Left ventricle myocardium inferior (tissue), 1 donor: ENCODE measurements at regions of chr11 and their contacts with region 1.

Region 1: DNA sequence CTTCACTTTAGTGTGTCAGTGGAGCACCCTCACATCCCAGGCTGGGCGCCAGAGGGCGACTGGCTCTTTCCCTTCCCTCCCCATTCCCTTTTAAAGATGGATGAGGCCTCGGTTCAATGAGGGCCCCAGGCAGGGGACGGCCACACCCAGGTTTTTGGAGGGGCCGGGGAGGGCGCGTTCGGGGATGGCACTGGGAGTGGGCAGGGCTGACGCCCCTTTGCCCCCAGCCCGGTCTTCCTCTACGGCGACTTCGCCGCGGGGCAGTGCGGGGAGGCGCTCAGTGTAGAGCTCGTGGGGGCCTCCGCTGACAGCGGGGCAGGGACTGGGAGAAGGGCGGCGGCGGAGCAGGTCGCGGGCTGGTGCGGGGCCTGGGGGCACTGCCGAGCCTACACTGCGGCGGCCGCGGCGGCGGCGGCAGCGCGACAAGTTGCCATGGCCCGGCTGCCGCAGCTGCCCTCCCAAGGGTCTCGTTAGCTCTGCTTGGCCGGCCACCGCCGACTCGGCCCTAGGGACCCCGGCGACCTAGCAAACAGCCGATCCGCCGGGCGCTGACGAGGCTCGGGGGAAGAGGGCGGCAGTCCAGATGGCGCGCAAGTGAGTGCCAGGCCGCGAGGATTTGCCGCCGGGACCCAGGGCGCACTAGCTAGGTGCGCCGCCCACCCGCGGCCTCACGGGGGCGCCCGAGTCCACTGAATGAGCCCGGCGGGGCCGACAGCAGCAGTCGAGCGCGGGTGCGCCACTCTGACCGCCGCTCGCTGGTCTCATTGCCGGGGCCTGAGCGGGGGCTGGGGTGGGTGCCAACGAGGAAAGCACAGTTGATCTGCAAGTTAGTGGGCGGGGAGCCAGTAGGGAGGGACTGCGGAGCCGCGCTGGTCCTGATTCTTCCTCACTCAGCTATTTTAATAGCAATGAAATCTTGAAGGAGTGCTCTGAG is 92.7 kb downstream of the RRM1 start:
- DNase-seq: peak; percentile 93
- H3K4me3 ChIP-seq: peak overlapping the region; percentile 77
- H3K27ac ChIP-seq: peak overlapping the region; percentile 50
- H3K4me1 ChIP-seq: peaks cover 26% of the 10 kb centered on the region
- H3K27me3 ChIP-seq: no peaks in the 10 kb centered on the region
- CTCF ChIP-seq: peak; percentile 95

Region 2: GRCh38 chr11:4368286-4368685 is 181.0 kb after region 1 on chr11 and contains the start of gene OR52B4:
- intact Hi-C with region 1: no loop called
- DNase-seq: no peak
- H3K4me3 ChIP-seq: no peak within 1 kb of the TSS
- H3K27ac ChIP-seq: no peak within 1 kb of the TSS
- H3K4me1 ChIP-seq: no peaks in the 10 kb centered on the region
- H3K27me3 ChIP-seq: no peaks in the 10 kb centered on the region
- CTCF ChIP-seq: no peak
- total RNA-seq, gene OR52B4: not detected

Region 3: DNA sequence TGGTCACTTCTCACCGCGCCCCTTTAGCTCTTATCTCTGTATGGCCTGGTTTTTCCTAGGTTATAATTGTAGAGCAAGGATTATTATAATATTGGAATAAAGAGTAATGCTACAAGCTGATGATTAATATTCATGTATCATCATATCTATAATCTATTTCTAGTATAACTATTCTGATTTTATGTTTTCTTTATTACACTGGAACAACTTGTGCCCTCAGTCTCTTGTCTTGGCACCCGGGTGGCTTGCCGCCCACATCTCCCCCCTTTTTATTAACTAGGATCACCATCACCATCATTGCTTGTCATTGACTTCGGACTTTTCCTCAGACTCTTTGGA is 306.1 kb after region 1 on chr11:
- intact Hi-C with region 1: loop called (anchors 5 kb)
- DNase-seq: no peak
- H3K4me3 ChIP-seq: no peak overlapping the region
- H3K27ac ChIP-seq: no peak overlapping the region
- H3K4me1 ChIP-seq: peaks cover 15% of the 10 kb centered on the region
- H3K27me3 ChIP-seq: peaks cover 5% of the 10 kb centered on the region
- CTCF ChIP-seq: peak; percentile 14

Region 4: GRCh38 chr11:4539603-4540219 is 352.4 kb after region 1 on chr11:
- intact Hi-C with region 1: loop called (anchors 10 kb)
- DNase-seq: peak; percentile 21
- H3K4me3 ChIP-seq: no peak overlapping the region
- H3K27ac ChIP-seq: no peak overlapping the region
- H3K4me1 ChIP-seq: no peaks in the 10 kb centered on the region
- H3K27me3 ChIP-seq: peaks cover 25% of the 10 kb centered on the region
- CTCF ChIP-seq: peak; percentile 79